Dendritic cell treated with granulocyte-macrophage colony-stimulating factor and Interleukin-4, amounts not matched to agents 40 ng/mL and 50 ng/mL, for 4 days (primary cell): ENCODE measurements at regions of chr18 and their contacts with region 1.

Region 1: DNA sequence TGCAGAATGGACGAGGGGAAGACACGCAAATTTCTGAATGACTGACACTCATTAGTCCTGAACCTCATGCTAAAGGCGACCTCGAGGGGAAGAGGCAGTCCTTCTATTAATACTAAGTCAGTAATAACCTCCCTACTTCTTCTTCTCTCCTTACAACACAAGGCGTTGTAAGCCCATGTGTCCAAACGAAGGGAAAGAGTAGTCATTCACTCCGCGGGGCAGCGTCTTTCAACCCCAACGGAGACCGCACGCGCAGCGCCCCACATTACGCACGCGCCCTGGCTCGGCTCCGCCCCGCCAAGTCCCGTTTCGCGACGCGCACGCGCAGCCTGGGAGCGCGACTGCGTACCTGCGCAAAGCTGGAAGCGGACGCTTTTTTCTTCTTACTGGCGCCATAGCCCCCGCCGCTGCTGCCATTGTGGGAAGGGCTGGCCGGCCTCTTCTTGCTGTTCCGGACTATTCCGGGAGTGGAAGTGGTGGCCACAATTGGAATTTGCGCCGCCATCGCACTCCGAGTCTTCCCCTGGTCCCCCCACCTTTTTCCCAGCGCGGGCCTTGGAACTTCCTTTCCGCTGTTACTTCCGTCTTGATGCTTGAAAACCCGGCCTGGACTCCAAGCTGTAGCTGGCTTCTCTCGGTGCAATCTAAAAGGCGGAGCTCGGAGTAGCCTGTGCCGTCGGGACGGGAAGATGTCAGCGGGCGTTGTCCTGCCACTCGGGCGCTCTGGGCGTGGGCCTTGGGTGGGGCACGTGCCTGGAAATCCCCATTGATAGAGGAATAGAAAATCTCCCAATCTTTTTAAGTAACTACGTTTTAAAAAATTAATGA is at the start of gene INO80C:
- H3K4me3 Mint-ChIP-seq: peak within 1 kb of the TSS; percentile 99
- H3K27ac Mint-ChIP-seq: peak within 1 kb of the TSS; percentile 99
- H3K4me1 Mint-ChIP-seq: peaks cover 49% of the 10 kb centered on the region
- H3K27me3 Mint-ChIP-seq: no peaks in the 10 kb centered on the region

Region 2: GRCh38 chr18:35478520-35479435 is 18.8 kb before region 1 on chr18:
- intact Hi-C with region 1: loop called (anchors 2 kb)
- H3K4me3 Mint-ChIP-seq: no peak overlapping the region
- H3K27ac Mint-ChIP-seq: peak overlapping the region; percentile 84
- H3K4me1 Mint-ChIP-seq: peaks cover 53% of the 10 kb centered on the region
- H3K27me3 Mint-ChIP-seq: no peaks in the 10 kb centered on the region

Region 3: GRCh38 chr18:35580701-35581539 is 83.3 kb after region 1 on chr18:
- intact Hi-C with region 1: loop called (anchors 5 kb)
- H3K4me3 Mint-ChIP-seq: peak overlapping the region; percentile 76
- H3K27ac Mint-ChIP-seq: peak overlapping the region; percentile 68
- H3K4me1 Mint-ChIP-seq: peaks cover 29% of the 10 kb centered on the region
- H3K27me3 Mint-ChIP-seq: no peaks in the 10 kb centered on the region